Posterior cingulate gyrus (tissue), 11 donors: ENCODE measurements at regions of chr2 and their contacts with region 1.

Region 1: GRCh38 chr2:136378712-136379595 is 261.0 kb upstream of the CXCR4 start:
- DNase-seq: peak in 7 of 10 donors; percentile 30 to 91 (median 61)

Region 2: GRCh38 chr2:135916207-135916606 is 462.7 kb before region 1 on chr2:
- intact Hi-C with region 1: loop called (anchors 1 kb)
- DNase-seq: no peak

Region 3: GRCh38 chr2:136112317-136113208 is 266.4 kb before region 1 on chr2:
- intact Hi-C with region 1: loop called (anchors 5 kb)
- DNase-seq: peak in 4 of 10 donors; percentile 46 to 76 (median 56)

Region 4: DNA sequence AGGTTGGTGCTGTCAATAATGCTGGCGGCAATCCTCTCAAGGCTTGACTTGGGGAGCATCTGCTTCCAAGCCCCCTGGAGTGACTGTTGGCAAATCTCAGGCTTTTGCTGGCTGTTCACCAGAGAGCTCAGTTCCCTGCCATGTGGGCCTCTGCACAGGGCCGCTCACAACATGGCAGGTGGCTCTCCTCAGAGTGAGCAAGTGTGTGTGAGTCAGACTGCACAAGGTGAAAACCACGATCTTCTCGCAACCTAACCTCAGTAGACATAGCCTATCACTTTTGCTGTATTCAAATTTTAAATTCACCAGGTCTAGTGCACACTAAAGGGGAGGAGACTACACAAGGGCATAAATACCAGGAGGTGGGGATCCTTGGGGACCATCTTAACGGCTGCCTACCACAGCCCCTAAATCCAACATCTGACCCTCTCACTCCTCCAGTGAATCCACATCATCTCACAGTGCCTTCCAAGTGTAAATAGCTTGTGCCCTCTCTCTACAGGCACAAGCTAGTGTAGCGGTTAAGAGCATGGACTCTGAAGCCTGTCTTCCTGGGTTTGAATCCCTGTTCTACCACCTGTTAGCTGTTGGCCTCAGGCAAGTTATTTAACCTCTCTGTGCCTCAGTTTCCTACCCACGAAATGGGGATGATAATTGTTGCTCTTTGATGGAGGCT is 73.3 kb before region 1 on chr2:
- intact Hi-C with region 1: no loop called
- DNase-seq: no peak

Region 5: DNA sequence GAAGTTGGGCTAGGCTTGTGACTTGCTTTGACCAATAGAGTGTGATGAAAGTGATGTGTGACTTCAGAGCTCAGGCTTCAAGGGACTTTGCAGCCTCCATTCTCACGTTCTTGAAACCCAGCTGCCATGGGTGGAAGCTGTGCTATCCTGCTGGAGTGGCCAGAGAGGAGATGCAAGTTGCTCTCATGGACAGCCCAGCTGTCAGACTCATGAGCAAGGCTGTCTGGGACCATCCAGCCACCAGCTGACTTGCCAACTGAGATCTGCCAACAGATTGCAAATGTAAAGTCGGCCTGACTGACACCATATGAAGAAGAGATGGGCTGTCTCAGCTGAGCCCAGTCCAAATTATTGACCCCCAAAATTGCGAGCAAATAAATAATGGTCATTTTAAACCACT is 34.6 kb before region 1 on chr2:
- intact Hi-C with region 1: no loop called
- DNase-seq: no peak